GM12878 (cell line): ENCODE measurements at regions of chr2 and their contacts with region 1.

Region 1: GRCh38 chr2:166727095-166727494 is 161.2 kb upstream of the XIRP2 start:
- DNase-seq: peak; percentile 47
- ATAC-seq: peak; percentile 99
- H3K4me3 ChIP-seq: no peak overlapping the region
- H3K27ac ChIP-seq: no peak overlapping the region
- H3K4me1 ChIP-seq: peaks cover 3% of the 10 kb centered on the region; the same call in 1 of the 2 replicates
- H3K27me3 ChIP-seq: no peaks in the 10 kb centered on the region
- CTCF ChIP-seq: no peak
- EP300 ChIP-seq: peak; percentile 97 to 99; a peak in 3 of 4 replicates
- POLR2A ChIP-seq: no peak
- RAD21 ChIP-seq: no peak

Region 2: DNA sequence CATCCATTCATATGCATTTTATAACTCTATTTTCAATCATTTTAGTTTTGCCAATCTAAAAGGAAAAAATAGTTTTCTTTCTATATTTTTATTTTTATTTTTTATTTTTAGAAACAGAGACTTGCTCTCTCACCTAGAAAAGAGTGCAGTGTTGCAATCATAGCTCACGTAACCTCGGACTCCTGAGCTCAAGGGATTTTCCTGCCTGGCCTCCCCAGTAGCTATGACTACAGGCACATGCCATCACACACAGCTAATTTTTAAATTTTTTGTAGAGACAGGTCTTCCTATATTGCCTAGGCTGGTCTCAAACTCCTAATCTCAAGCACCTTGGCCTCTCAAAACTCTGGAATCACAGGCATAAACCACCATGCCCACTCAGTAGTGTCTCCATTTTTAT is 35.7 kb after region 1 on chr2:
- CTCF ChIA-PET with region 1: interaction called, 3 read pairs
- POLR2A ChIA-PET with region 1: no interaction called
- RAD21 ChIA-PET with region 1: interaction called, 11 read pairs
- SMC1A ChIA-PET with region 1: interaction called, 21 read pairs
- in situ Hi-C with region 1: no loop called
- intact Hi-C with region 1: no loop called
- DNase-seq: no peak
- ATAC-seq: peak; percentile 83
- H3K4me3 ChIP-seq: no peak overlapping the region
- H3K27ac ChIP-seq: no peak overlapping the region
- H3K4me1 ChIP-seq: no peaks in the 10 kb centered on the region
- H3K27me3 ChIP-seq: no peaks in the 10 kb centered on the region
- CTCF ChIP-seq: no peak
- EP300 ChIP-seq: no peak
- POLR2A ChIP-seq: no peak
- RAD21 ChIP-seq: no peak

Region 3: DNA sequence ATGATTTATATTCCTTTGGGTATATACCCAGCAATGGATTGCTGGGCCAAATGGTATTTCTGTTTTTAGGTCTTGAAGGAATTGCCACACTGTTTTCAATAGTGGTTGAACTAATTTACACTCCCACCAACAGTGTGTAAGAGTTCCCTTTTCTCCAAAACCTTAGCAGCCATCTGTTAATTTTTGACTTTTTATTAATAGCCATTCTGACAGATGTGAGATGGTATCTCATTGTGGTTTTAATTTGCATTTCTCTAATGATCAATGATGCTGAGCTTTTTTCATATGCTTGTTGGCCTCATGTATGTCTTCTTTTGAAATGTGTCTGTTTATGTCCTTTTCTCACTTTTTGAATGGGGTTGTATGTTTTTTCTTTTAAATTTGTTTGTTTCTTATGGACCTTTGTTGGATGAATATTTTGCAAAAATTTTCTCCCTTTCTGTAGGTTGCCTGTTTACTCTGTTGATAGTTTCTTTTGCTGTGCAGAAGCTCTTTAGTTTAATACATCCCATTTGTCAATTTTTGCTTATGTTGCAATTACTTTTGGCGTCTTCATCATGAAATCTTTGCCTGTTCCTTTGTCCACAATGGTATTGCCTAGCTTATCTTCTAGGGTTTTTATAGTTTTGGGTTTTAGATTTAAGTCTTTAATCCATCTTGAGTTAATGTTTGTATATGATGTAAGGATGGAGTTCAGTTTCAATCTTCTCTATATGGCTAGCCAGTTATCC is 41.5 kb after region 1 on chr2:
- CTCF ChIA-PET with region 1: no interaction called
- POLR2A ChIA-PET with region 1: no interaction called
- RAD21 ChIA-PET with region 1: interaction called, 4 read pairs
- SMC1A ChIA-PET with region 1: interaction called, 21 read pairs
- in situ Hi-C with region 1: no loop called
- intact Hi-C with region 1: no loop called
- DNase-seq: no peak
- ATAC-seq: peak; percentile 77
- H3K4me3 ChIP-seq: no peak overlapping the region
- H3K27ac ChIP-seq: no peak overlapping the region
- H3K4me1 ChIP-seq: no peaks in the 10 kb centered on the region
- H3K27me3 ChIP-seq: no peaks in the 10 kb centered on the region
- CTCF ChIP-seq: no peak
- EP300 ChIP-seq: peak; percentile 45 to 53; a peak in 1 of 4 replicates
- POLR2A ChIP-seq: no peak
- RAD21 ChIP-seq: no peak